Spleen (tissue), 13 donors: ENCODE measurements at regions of chr1 and their contacts with region 1.

Region 1: GRCh38 chr1:164786980-164787833 is 228.2 kb downstream of the PBX1 start:
- DNase-seq: peak; percentile 87
- H3K4me3 ChIP-seq: no peak overlapping the region
- H3K27ac ChIP-seq: no peak overlapping the region
- H3K4me1 ChIP-seq: peaks cover 0 to 29% (median 21%) of the 10 kb centered on the region in 6 donors
- H3K27me3 ChIP-seq: peaks cover 0 to 8% (median 0%) of the 10 kb centered on the region in 7 donors
- CTCF ChIP-seq: peak; percentile 62 to 91 (median 87)
- POLR2A ChIP-seq: no peak

Region 2: DNA sequence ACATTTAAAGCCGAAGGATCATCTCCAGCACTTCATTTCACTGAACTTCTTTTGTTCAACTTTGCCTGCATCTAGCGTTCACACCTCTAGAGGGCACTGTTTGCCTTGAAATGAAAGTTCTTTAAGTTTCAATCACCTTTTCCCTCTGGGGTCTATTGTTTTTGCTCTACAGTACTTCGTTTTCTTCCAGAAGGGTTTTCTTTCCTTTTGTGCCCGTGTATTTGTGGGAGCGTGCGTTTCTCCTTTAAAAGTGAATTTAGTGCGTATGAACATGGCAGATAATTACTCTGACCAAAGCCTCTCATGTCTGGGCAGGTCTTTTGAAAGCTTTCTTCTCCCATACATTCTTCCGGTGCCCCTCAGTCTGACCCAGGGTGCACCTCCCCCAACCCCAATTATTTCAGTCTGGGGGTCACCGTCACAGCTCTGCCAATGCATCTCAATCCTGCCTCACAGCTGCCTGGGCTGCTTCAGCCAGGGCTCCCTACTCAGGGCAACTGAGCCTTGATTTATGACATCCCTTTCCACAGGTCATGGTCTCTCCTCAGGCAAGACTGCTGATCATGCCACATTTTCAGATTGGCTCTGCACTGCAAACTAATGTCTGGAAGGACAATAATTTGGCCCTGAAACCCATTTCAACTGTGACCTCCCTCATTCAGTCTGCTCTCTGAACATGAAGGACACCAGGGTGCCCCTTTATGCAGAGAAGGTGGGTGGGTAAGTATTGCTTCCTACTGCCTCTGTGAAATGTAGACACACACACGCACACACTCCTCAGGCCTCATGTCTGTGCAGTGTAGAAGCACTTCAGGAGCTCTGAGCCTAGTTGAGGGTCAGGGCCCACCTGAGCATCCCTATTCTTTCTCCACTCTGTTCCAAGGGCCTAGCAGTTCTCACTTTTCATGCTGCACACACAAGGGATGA is 1376.9 kb before region 1 on chr1:
- intact Hi-C with region 1: loop called (anchors 10 kb)
- DNase-seq: no peak
- H3K4me3 ChIP-seq: no peak overlapping the region
- H3K27ac ChIP-seq: no peak overlapping the region
- H3K4me1 ChIP-seq: peaks cover 0 to 11% (median 4%) of the 10 kb centered on the region in 6 donors
- H3K27me3 ChIP-seq: peaks cover 0 to 9% (median 0%) of the 10 kb centered on the region in 7 donors
- CTCF ChIP-seq: peak in 10 of 11 experiments; percentile 25 to 85 (median 69)
- POLR2A ChIP-seq: no peak